HEK293T (cell line): ENCODE measurements at regions of chr18 and their contacts with region 1.

Region 1: DNA sequence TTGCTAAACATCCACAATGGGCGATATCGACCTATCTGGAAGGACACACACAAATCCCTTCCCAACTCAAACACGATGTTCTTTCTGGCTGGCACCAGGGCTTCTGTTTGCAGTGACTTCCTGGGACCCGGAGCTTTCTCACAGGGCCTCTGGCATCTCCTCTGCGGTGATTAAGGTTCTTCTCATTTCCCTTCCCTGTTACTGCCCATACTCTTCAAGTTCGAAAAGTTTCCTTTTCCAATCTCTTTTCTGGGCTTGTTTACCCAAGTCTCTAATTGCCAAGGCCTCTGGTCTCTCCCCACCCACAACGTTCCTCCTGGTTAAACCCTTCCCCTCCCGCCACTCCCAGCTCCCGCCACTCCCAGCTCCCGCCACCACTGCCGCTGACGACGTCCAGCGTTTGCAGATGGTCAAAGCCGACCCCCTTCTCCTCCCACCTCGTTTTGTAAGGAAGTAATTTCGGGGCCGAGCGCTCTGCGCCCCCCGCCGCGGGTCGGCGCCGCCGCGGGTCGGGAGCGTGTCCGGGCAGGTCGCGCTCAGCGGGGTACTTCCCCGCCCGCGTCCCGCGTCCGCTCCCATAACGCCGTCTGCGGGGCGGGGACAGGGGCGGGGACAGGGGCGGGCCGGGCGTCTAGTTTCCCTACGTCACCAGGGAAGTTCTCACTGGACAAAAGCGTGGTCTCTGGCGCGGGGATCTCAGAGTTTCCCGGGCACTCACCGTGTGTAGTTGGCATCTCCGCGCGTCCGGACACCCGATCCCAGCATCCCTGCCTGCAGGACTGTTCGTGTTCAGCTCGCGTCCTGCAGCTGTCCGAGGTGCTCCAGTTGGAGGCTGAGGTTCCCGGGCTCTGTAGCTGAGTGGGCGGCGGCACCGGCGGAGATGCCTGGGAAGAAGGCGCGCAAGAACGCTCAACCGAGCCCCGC is at the start of gene PMAIP1:
- DNase-seq: peak; percentile 74

Region 2: DNA sequence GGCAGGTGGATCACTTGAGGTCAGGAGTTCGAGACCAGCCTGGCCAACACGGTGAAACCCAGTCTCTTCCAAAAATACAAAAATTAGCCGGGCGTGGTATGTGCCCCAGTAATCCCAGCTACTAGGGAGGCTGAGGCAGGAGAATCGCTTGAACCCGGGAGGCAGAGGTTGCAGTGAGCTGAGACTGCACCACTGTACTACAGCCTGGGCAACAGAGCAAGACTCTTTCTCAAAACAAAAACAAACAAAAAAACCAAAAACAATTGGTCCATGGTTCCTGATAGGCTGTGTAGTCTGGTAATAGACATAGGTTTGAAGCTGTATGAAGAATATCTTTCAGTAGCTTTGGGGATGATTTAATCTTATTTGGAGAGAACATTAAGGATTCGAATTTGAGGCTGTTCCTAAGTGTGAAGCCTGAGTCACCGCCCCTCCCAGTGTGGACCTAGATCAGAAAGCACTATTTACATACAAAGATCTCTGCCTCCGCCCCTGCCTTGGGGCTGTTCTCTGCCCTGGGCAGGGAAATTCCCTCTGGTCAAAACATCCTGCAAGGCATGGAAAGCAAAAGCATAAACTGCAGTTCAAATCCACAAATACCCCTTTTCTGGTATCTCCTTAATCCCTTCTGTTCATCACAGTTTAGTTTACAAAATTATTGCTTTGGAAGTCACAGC is 52.6 kb before region 1 on chr18:
- CTCF ChIA-PET with region 1: no interaction called
- POLR2A ChIA-PET with region 1: interaction called, 110 read pairs
- DNase-seq: no peak

Region 3: DNA sequence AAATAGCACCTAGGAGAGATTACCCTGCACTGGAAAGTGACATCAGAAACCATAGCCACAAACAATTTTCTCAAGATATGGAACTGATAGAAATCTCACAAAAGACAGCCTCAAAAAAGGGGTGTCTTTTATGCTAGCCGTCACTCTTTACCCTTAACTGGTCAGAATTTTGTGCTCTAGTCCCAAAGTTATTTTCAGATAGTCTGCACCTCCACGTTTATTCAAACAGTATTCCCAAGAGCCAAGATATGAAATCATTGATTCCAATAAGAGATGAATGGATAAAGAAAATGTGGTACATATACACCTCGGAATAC is 23.3 kb before region 1 on chr18:
- CTCF ChIA-PET with region 1: no interaction called
- POLR2A ChIA-PET with region 1: interaction called, 77 read pairs
- DNase-seq: no peak

Region 4: DNA sequence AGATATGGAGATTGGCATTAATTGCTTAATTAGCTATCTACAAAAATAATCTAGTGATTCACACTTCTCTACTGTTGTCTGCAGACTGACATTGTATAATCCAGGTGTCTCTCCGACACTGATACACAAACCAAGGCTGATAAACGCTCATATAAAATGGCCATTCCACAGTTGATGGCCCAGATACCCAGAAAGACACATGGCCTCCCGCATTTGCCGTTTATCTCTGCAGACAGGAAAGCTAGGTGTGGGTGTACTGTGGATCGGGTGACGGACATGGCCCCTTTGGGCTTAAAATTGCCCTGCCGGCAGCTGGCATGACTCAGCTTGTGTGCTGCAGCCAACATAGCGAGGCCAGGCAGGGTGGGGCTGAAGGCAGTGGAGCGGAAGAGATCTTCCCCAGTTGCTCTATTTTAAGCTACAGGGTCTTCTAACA is 18.8 kb after region 1 on chr18:
- CTCF ChIA-PET with region 1: interaction called, 3 read pairs
- POLR2A ChIA-PET with region 1: interaction called, 27 read pairs
- DNase-seq: peak; percentile 24

Region 5: DNA sequence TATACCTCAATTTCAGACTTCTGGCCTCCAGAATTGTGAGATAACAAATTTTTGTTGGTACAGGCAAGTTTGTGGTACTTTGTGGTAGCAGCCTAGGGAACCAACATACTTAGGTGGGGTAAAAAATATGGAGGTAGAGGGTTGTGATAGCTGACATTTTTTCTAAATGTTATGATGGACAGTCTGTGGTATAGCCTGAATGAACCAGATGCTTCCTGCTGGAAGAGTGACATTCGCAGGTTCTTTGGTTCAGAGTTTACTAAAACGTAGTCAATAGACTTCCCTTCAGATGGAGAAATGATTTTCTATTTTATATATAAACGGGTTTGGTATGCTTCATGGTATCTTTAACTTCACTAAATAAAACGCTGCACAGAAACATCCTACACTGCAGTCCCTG is 43.0 kb after region 1 on chr18:
- CTCF ChIA-PET with region 1: no interaction called
- POLR2A ChIA-PET with region 1: no interaction called
- DNase-seq: no peak